Naive thymus-derived CD4-positive, alpha-beta T cell (primary cell): ENCODE measurements at regions of chr17 and their contacts with region 1.

Region 1: GRCh38 chr17:50944054-50944901 is 78.1 kb upstream of the TOB1 start:
- DNase-seq: peak; percentile 56 to 79 (median 73)
- ATAC-seq: peak; percentile 91
- H3K4me3 ChIP-seq: peak overlapping the region; percentile 73
- H3K4me3 Mint-ChIP-seq: peak overlapping the region; percentile 73 to 90 (median 85)
- H3K27ac ChIP-seq: peak overlapping the region; percentile 88
- H3K27ac Mint-ChIP-seq: peak overlapping the region; percentile 78 to 95 (median 94)
- H3K4me1 ChIP-seq: peaks cover 17 to 33% of the 10 kb centered on the region in 2 donors
- H3K4me1 Mint-ChIP-seq: peaks cover 25 to 61% (median 35%) of the 10 kb centered on the region in 7 donors
- H3K27me3 ChIP-seq: no peaks in the 10 kb centered on the region
- H3K27me3 Mint-ChIP-seq: no peaks in the 10 kb centered on the region

Region 2: DNA sequence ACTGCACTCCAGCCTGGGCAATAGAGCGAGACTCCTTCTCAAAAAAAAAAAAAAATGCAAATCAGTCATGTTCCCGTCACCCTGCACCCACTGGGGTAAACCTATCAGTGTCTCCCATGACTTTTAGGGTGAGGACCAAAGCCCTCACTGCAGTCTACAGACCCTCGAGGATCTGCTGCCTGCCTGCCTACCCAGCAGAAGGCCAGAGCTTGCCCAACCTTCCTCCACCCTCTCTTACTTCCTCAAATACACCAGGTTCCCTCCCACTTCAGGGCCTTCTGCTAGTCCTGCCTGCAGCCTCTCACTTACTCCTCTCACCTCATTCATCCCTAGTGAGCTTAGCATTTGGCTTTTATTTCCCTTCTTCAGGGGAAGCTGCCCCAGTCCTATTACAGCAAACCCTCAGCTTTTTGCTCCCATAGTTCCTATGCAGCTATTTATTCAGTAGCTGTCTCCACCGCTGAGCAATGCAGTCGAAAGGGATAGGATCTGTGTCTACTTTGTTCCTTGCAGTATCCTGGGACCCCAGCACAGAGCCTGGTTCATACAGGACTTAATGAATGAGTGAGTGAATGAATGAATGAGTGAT is 60.3 kb before region 1 on chr17:
- CTCF ChIA-PET with region 1: no interaction called
- POLR2A ChIA-PET with region 1: interaction called, 12 read pairs
- intact Hi-C with region 1: no loop called
- DNase-seq: no peak
- ATAC-seq: peak; percentile 79
- H3K4me3 ChIP-seq: no peak overlapping the region
- H3K4me3 Mint-ChIP-seq: no peak overlapping the region
- H3K27ac ChIP-seq: peak overlapping the region; percentile 10
- H3K27ac Mint-ChIP-seq: peak overlapping the region; percentile 7 to 92 (median 54)
- H3K4me1 ChIP-seq: peaks cover 0 to 16% of the 10 kb centered on the region in 2 donors
- H3K4me1 Mint-ChIP-seq: peaks cover 24 to 46% (median 36%) of the 10 kb centered on the region in 7 donors
- H3K27me3 ChIP-seq: no peaks in the 10 kb centered on the region
- H3K27me3 Mint-ChIP-seq: peaks cover 0 to 19% (median 0%) of the 10 kb centered on the region in 5 donors

Region 3: GRCh38 chr17:50909765-50910605 is 34.3 kb before region 1 on chr17:
- CTCF ChIA-PET with region 1: interaction called, 5 read pairs
- POLR2A ChIA-PET with region 1: interaction called, 94 read pairs
- intact Hi-C with region 1: loop called in 1 of 2 experiments (anchors 1 kb)
- DNase-seq: peak in 7 of 9 donors; percentile 67 to 87 (median 81)
- ATAC-seq: peak; percentile 92
- H3K4me3 ChIP-seq: peak overlapping the region; percentile 46
- H3K4me3 Mint-ChIP-seq: peak overlapping the region; percentile 29 to 84 (median 66)
- H3K27ac ChIP-seq: peak overlapping the region; percentile 75
- H3K27ac Mint-ChIP-seq: peak overlapping the region; percentile 87 to 99 (median 98)
- H3K4me1 ChIP-seq: peaks cover 50 to 69% of the 10 kb centered on the region in 2 donors
- H3K4me1 Mint-ChIP-seq: peaks cover 41 to 78% (median 67%) of the 10 kb centered on the region in 7 donors
- H3K27me3 ChIP-seq: no peaks in the 10 kb centered on the region
- H3K27me3 Mint-ChIP-seq: peaks cover 0 to 2% (median 0%) of the 10 kb centered on the region in 5 donors

Region 4: GRCh38 chr17:50919321-50920085 is 24.8 kb before region 1 on chr17:
- CTCF ChIA-PET with region 1: no interaction called
- POLR2A ChIA-PET with region 1: interaction called, 94 read pairs
- intact Hi-C with region 1: loop called in 1 of 2 experiments (anchors 1 kb)
- DNase-seq: peak; percentile 67 to 91 (median 83)
- ATAC-seq: peak; percentile 95
- H3K4me3 ChIP-seq: no peak overlapping the region
- H3K4me3 Mint-ChIP-seq: peak overlapping the region; percentile 36 to 86 (median 75)
- H3K27ac ChIP-seq: peak overlapping the region; percentile 76
- H3K27ac Mint-ChIP-seq: peak overlapping the region; percentile 89 to 98 (median 97)
- H3K4me1 ChIP-seq: peaks cover 22 to 44% of the 10 kb centered on the region in 2 donors
- H3K4me1 Mint-ChIP-seq: peaks cover 19 to 56% (median 43%) of the 10 kb centered on the region in 7 donors
- H3K27me3 ChIP-seq: no peaks in the 10 kb centered on the region
- H3K27me3 Mint-ChIP-seq: peaks cover 0 to 9% (median 0%) of the 10 kb centered on the region in 5 donors

Region 5: DNA sequence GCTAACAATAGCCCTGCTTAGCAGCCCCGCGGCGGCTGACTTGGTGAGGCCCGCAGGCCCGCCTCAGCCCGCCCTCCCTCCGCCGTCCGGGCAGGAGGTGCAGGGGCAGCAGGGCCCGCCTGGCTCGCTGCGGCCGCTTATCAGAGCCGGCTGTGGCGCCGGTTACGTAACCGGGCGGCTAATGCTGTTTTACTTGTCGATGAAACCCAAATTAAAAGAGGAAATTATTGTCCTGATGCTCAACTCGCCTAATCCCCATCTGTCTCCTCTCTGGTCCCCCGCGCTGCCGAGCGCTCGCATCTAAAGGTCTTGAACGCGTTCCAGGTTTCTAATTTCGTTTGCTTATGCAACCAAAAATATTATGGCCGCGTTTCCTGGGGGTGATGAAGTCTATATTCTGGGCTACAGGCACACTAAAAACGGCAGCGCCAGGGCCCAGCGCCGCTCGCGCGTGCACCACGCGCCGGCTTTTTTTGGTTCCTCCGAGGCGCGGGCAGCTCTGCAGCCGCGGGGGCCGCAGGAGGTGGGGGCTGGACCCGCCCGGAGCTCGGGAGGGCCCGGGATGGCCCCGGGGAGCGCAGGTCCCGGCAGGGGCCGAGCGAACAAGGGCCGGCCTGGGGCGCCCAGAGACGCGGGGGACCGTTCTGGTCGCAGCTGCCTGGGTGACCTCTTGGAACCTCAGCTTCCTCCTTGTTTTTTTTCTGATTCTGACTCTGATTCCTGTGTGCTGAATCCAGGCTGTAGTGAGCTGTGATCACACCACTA is 13.0 kb before region 1 on chr17:
- CTCF ChIA-PET with region 1: interaction called, 10 read pairs
- POLR2A ChIA-PET with region 1: interaction called, 30 read pairs
- intact Hi-C with region 1: loop called (anchors 1 to 2 kb)
- DNase-seq: peak in 8 of 9 donors; percentile 47 to 73 (median 60)
- ATAC-seq: peak; percentile 69
- H3K4me3 ChIP-seq: peak overlapping the region; percentile 69
- H3K4me3 Mint-ChIP-seq: peak overlapping the region; percentile 84 to 97 (median 92)
- H3K27ac ChIP-seq: peak overlapping the region; percentile 63
- H3K27ac Mint-ChIP-seq: peak overlapping the region; percentile 77 to 100 (median 96)
- H3K4me1 ChIP-seq: peaks cover 20 to 21% of the 10 kb centered on the region in 2 donors
- H3K4me1 Mint-ChIP-seq: peaks cover 17 to 53% (median 33%) of the 10 kb centered on the region in 7 donors
- H3K27me3 ChIP-seq: no peaks in the 10 kb centered on the region
- H3K27me3 Mint-ChIP-seq: peaks cover 0 to 25% (median 0%) of the 10 kb centered on the region in 5 donors

Region 6: GRCh38 chr17:50956750-50957523 is 12.7 kb after region 1 on chr17:
- CTCF ChIA-PET with region 1: interaction called, 4 read pairs
- POLR2A ChIA-PET with region 1: interaction called, 5 read pairs
- intact Hi-C with region 1: loop called in 1 of 2 experiments (anchors 1 kb)
- DNase-seq: peak; percentile 39 to 72 (median 58)
- ATAC-seq: peak; percentile 92
- H3K4me3 ChIP-seq: no peak overlapping the region
- H3K4me3 Mint-ChIP-seq: peak overlapping the region in 1 of 10 donors; percentile 68
- H3K27ac ChIP-seq: no peak overlapping the region
- H3K27ac Mint-ChIP-seq: peak overlapping the region in 4 of 9 donors; percentile 17 to 62 (median 50)
- H3K4me1 ChIP-seq: peaks cover 0 to 7% of the 10 kb centered on the region in 2 donors
- H3K4me1 Mint-ChIP-seq: peaks cover 0 to 8% (median 4%) of the 10 kb centered on the region in 7 donors
- H3K27me3 ChIP-seq: no peaks in the 10 kb centered on the region
- H3K27me3 Mint-ChIP-seq: no peaks in the 10 kb centered on the region

Region 7: DNA sequence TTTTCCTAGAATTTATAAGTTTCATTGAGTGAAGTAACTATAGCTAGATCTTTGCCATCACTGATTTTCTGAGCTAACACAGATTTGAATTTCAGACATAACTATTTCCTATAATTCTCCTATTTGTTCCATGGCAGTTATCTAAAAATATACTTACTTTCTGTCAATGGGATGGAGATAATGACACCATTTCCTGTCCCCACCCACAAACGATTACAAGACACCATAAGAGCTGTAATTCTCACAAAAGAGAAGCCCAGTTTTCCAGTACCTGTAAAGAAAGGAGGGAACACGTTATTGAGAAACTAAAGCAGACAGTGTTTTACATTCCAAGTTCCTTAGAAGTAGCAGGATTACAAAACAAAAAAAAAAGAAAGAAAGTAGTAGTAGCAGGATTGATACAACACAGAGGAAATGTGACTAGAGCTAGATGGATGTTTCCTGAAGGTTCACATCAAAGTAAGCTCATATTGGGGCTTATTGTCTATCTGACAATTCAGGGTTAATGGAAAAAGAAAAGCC is 32.7 kb after region 1 on chr17:
- CTCF ChIA-PET with region 1: no interaction called
- POLR2A ChIA-PET with region 1: no interaction called
- intact Hi-C with region 1: no loop called
- DNase-seq: no peak
- ATAC-seq: no peak
- H3K4me3 ChIP-seq: no peak overlapping the region
- H3K4me3 Mint-ChIP-seq: peak overlapping the region in 2 of 10 donors; percentile 3 to 56
- H3K27ac ChIP-seq: no peak overlapping the region
- H3K27ac Mint-ChIP-seq: peak overlapping the region in 6 of 9 donors; percentile 10 to 90 (median 56)
- H3K4me1 ChIP-seq: no peaks in the 10 kb centered on the region
- H3K4me1 Mint-ChIP-seq: peaks cover 12 to 21% (median 17%) of the 10 kb centered on the region in 7 donors
- H3K27me3 ChIP-seq: no peaks in the 10 kb centered on the region
- H3K27me3 Mint-ChIP-seq: no peaks in the 10 kb centered on the region